Activated CD4-positive, alpha-beta T cell treated with anti-CD3 and anti-CD28 coated beads for 36 hours (primary cell): ENCODE measurements at regions of chr9 and their contacts with region 1.

Region 1: DNA sequence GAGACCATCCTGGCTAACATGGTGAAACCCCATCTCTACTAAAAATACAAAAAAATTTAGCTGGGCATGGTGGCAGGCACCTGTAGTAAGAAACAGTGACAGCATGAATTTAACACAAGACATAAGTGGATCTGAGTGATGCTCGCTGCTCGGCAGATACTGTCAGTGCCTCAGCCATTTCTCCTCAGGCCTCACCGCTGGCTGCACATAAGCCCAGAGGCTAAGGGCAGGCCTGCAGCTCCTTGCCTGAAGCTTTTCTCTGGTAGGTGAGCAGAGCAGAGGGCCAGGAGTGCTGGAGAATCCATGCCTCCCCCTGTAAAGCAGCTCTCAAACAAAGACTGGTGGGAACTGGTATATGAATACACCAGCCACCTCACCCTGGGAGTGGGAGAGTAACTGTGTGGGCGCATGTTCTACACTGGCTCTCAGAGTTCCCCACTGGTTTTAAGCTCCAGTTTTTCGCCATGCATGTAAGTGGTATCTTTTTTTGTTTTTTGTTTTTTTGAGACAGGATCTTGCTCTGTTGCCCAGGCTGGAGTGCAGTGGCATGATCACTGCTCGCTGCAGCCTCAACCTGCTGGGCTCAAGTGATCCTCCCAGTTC is 10.3 kb upstream of the CD72 start:
- DNase-seq: no peak
- ATAC-seq: no peak
- H3K4me3 Mint-ChIP-seq: no peak overlapping the region
- H3K27ac Mint-ChIP-seq: no peak overlapping the region
- H3K4me1 Mint-ChIP-seq: peaks cover 3% of the 10 kb centered on the region
- H3K27me3 Mint-ChIP-seq: no peaks in the 10 kb centered on the region

Region 2: GRCh38 chr9:34961574-34962490 is 666.7 kb before region 1 on chr9:
- CTCF ChIA-PET with region 1: no interaction called
- POLR2A ChIA-PET with region 1: no interaction called
- intact Hi-C with region 1: no loop called
- DNase-seq: peak; percentile 55
- ATAC-seq: peak; percentile 85
- H3K4me3 Mint-ChIP-seq: no peak overlapping the region
- H3K27ac Mint-ChIP-seq: no peak overlapping the region
- H3K4me1 Mint-ChIP-seq: peaks cover 28% of the 10 kb centered on the region
- H3K27me3 Mint-ChIP-seq: peaks cover 48% of the 10 kb centered on the region

Region 3: DNA sequence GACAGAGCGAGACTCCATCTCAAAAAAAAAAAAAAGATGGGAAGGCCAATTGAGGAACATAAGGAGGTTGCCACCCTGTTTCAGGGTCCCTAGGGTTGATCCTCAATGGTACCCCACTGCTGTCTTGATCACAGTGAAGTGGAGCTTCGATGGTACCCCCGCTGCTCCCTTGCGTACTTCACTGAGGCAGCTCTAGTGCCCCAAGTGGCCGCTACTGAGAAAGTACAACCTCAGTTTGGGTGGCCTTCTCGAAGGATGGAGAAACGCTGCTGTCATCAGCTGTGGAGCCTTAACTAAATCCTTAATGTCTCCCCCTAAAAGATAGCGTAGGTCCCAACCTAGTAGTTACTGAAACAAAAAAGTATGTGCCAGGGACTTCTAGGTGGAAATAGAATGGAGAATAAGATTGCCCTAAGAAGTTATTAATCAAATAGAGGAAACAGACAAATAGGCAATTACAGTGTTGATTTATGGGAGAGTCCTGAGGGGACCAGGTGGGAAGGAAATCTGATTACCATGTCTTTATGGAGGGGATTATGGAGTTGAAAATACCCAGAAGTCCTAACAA is 17.2 kb before region 1 on chr9:
- CTCF ChIA-PET with region 1: interaction called, 27 read pairs
- POLR2A ChIA-PET with region 1: no interaction called
- intact Hi-C with region 1: no loop called
- DNase-seq: peak; percentile 74
- ATAC-seq: peak; percentile 96
- H3K4me3 Mint-ChIP-seq: no peak overlapping the region
- H3K27ac Mint-ChIP-seq: no peak overlapping the region
- H3K4me1 Mint-ChIP-seq: peaks cover 13% of the 10 kb centered on the region
- H3K27me3 Mint-ChIP-seq: no peaks in the 10 kb centered on the region

Region 4: DNA sequence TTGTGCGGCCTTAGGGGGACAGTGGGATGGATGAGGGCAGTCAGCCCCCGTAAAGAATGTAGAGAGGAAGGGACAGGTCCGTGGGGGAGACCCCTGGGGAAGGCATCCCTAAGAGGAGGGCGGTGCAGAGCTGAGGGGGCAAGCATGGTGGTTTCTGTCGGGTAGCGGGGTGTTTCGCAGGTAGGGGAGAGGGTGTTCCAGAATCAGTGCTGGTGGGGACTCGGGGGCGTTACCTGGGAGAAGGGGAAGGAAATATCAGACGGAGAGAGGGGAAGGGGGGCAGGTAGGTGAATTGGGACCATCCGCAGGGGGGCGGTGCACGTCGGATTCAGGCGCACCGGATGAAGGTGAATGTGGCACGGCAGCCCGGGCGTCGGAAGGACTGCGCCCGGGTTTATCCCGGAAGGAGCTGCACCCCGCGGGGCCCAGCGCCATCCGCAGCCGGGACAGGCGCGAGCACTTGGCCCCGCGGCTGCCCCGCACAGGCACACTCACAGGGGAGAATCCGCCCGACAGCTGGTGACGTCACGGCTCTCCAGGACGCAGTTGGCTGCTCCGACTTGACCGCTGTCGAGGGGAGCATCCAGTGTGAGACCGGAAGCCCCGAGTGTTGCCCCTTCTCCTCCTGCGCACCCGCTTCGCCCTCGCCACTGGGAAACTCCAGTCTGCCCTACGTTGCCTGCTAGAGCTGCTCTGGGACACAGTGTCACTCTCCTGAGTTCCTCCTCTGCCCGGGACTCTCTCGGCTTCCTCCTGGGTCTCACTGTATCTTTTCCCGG is 11.6 kb before region 1 on chr9:
- CTCF ChIA-PET with region 1: interaction called, 27 read pairs
- POLR2A ChIA-PET with region 1: interaction called, 5 read pairs
- intact Hi-C with region 1: no loop called
- DNase-seq: peak; percentile 80
- ATAC-seq: peak; percentile 74
- H3K4me3 Mint-ChIP-seq: peak overlapping the region; percentile 77
- H3K27ac Mint-ChIP-seq: peak overlapping the region; percentile 79
- H3K4me1 Mint-ChIP-seq: peaks cover 38% of the 10 kb centered on the region
- H3K27me3 Mint-ChIP-seq: no peaks in the 10 kb centered on the region

Region 5: GRCh38 chr9:35686222-35687203 is 58.0 kb after region 1 on chr9:
- CTCF ChIA-PET with region 1: no interaction called
- POLR2A ChIA-PET with region 1: no interaction called
- intact Hi-C with region 1: no loop called
- DNase-seq: no peak
- ATAC-seq: no peak
- H3K4me3 Mint-ChIP-seq: no peak overlapping the region
- H3K27ac Mint-ChIP-seq: no peak overlapping the region
- H3K4me1 Mint-ChIP-seq: peaks cover 23% of the 10 kb centered on the region
- H3K27me3 Mint-ChIP-seq: no peaks in the 10 kb centered on the region